HepG2 (cell line): ENCODE measurements at regions of chr6 and their contacts with region 1.

Region 1: GRCh38 chr6:73675466-73676098 is 20.4 kb upstream of the CD109 start:
- DNase-seq: peak; percentile 71
- ATAC-seq: peak; percentile 99
- H3K4me3 ChIP-seq: no peak overlapping the region
- H3K27ac ChIP-seq: no peak overlapping the region
- H3K4me1 ChIP-seq: no peaks in the 10 kb centered on the region
- H3K27me3 ChIP-seq: peaks cover 2 to 3% of the 10 kb centered on the region in 2 experiments; a peak in 1 of 5 replicates
- CTCF ChIP-seq: peak; percentile 91
- EP300 ChIP-seq: no peak
- POLR2A ChIP-seq: no peak
- RAD21 ChIP-seq: peak; percentile 72

Region 2: DNA sequence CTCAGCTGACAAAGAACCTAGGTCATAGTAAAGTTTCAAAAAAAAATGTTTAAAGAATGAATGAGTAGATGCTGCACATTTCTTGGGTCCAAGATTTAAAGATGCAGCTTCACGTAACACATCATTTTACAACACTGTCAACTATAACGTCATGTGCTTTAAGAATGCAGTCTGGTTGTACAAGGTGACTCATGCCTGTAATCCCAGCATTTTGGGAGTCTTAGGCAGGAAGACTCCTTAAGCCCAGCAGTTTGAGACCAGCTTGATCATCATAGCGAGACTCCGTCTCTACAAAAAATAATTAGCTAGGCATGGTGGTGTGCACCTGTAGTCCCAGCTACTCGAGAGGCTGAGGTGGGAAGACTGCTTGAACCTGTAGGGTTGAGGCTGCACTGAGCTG is 43.7 kb before region 1 on chr6:
- CTCF ChIA-PET with region 1: no interaction called
- POLR2A ChIA-PET with region 1: no interaction called
- in situ Hi-C with region 1: no loop called
- intact Hi-C with region 1: no loop called
- DNase-seq: no peak
- ATAC-seq: no peak
- H3K4me3 ChIP-seq: no peak overlapping the region
- H3K27ac ChIP-seq: no peak overlapping the region
- H3K4me1 ChIP-seq: no peaks in the 10 kb centered on the region
- H3K27me3 ChIP-seq: no peaks in the 10 kb centered on the region
- CTCF ChIP-seq: no peak
- EP300 ChIP-seq: no peak
- POLR2A ChIP-seq: no peak
- RAD21 ChIP-seq: no peak

Region 3: GRCh38 chr6:73732845-73733675 is 57.5 kb after region 1 on chr6:
- CTCF ChIA-PET with region 1: interaction called, 60 read pairs
- POLR2A ChIA-PET with region 1: no interaction called
- in situ Hi-C with region 1: loop called (anchors 5 kb)
- intact Hi-C with region 1: loop called (anchors 1 kb)
- DNase-seq: peak; percentile 53
- ATAC-seq: peak; percentile 97
- H3K4me3 ChIP-seq: no peak overlapping the region
- H3K27ac ChIP-seq: no peak overlapping the region
- H3K4me1 ChIP-seq: no peaks in the 10 kb centered on the region
- H3K27me3 ChIP-seq: no peaks in the 10 kb centered on the region
- CTCF ChIP-seq: peak; percentile 89
- EP300 ChIP-seq: no peak
- POLR2A ChIP-seq: no peak
- RAD21 ChIP-seq: peak; percentile 46; the same call in 1 of the 2 replicates

Region 4: DNA sequence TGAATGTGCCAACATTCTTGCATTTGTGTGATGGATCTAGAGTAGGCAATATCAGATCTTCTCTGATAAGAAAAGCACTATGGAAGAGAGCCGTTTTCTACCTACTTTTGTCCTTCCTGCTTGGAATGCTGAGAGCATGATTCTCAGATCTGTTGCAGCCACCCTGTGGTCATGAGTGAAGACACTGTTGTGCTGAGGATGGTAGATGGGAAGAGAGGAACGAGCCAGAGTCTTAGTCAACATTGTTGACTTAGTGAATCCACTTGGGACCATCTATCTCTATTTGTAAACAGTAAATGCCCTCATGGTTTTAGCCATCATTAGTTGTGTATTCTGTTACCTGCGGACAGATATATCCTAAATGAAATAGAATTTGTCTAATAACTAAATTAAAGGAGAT is 223.0 kb after region 1 on chr6:
- CTCF ChIA-PET with region 1: no interaction called
- POLR2A ChIA-PET with region 1: no interaction called
- in situ Hi-C with region 1: no loop called
- intact Hi-C with region 1: no loop called
- DNase-seq: no peak
- ATAC-seq: no peak
- H3K4me3 ChIP-seq: no peak overlapping the region
- H3K27ac ChIP-seq: no peak overlapping the region
- H3K4me1 ChIP-seq: no peaks in the 10 kb centered on the region
- H3K27me3 ChIP-seq: no peaks in the 10 kb centered on the region
- CTCF ChIP-seq: 0 out of 2 replicates have a peak, but pooled peaks have one; percentile 15
- EP300 ChIP-seq: no peak
- POLR2A ChIP-seq: no peak
- RAD21 ChIP-seq: no peak